Posterior vena cava (tissue), 2 donors: ENCODE measurements at regions of chr2 and their contacts with region 1.

Region 1: GRCh38 chr2:140577453-140577852 is 1553.4 kb downstream of the LRP1B start:
- DNase-seq: no peak

Region 2: GRCh38 chr2:139916822-139917221 is 660.6 kb before region 1 on chr2:
- intact Hi-C with region 1: loop called in 1 of 2 experiments (anchors 5 kb)
- DNase-seq: no peak

Region 3: DNA sequence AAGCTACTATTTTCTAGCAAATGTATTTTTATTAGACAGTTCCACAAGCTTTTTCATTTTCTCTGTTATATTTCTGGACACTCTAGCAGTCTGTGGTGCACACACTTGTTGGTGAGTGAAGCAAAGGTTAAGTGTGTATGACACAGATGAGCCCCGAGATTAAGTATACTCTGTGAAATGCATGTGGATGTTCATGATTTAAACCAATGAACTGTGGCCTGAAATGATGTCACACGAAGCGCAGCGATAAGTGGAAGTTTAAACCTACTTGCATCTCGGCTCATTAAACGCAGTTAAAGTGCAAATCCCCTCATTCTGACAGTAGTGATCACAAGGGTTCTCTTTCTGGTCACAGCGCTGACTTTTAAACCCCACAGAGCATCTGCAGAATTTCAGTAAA is 308.5 kb before region 1 on chr2:
- intact Hi-C with region 1: no loop called
- DNase-seq: no peak

Region 4: GRCh38 chr2:140650825-140651224 is 73.4 kb after region 1 on chr2:
- intact Hi-C with region 1: no loop called
- DNase-seq: no peak

Region 5: GRCh38 chr2:141264848-141265247 is 687.4 kb after region 1 on chr2:
- intact Hi-C with region 1: no loop called
- DNase-seq: peak; percentile 77